Transverse colon (tissue), 4 donors: ENCODE measurements at regions of chr11 and their contacts with region 1.

Region 1: GRCh38 chr11:120511116-120511819 is at the start of gene GRIK4:
- DNase-seq: peak; percentile 81
- H3K4me3 ChIP-seq: peak within 1 kb of the TSS in 3 of 4 donors; percentile 33 to 49 (median 43)
- H3K27ac ChIP-seq: no peak within 1 kb of the TSS
- H3K4me1 ChIP-seq: peaks cover 0 to 5% (median 0%) of the 10 kb centered on the region in 4 donors
- H3K27me3 ChIP-seq: peaks cover 90% of the 10 kb centered on the region
- CTCF ChIP-seq: peak; percentile 89 to 95 (median 91)
- EP300 ChIP-seq: no peak
- POLR2A ChIP-seq: no peak
- total RNA-seq, gene GRIK4: 2.6 TPM in 1 of 4 donors, not detected in the others

Region 2: GRCh38 chr11:120254788-120255518 is 256.3 kb before region 1 on chr11:
- in situ Hi-C with region 1: no loop called
- intact Hi-C with region 1: no loop called
- DNase-seq: no peak
- H3K4me3 ChIP-seq: no peak overlapping the region
- H3K27ac ChIP-seq: no peak overlapping the region
- H3K4me1 ChIP-seq: no peaks in the 10 kb centered on the region
- H3K27me3 ChIP-seq: peaks cover 75% of the 10 kb centered on the region
- CTCF ChIP-seq: no peak
- EP300 ChIP-seq: no peak
- POLR2A ChIP-seq: no peak

Region 3: GRCh38 chr11:120688163-120688562 is 176.9 kb after region 1 on chr11:
- in situ Hi-C with region 1: loop called in 3 of 4 experiments (anchors 5 to 25 kb)
- intact Hi-C with region 1: no loop called
- DNase-seq: no peak
- H3K4me3 ChIP-seq: no peak overlapping the region
- H3K27ac ChIP-seq: no peak overlapping the region
- H3K4me1 ChIP-seq: no peaks in the 10 kb centered on the region
- H3K27me3 ChIP-seq: peaks cover 31% of the 10 kb centered on the region
- CTCF ChIP-seq: no peak
- EP300 ChIP-seq: no peak
- POLR2A ChIP-seq: no peak

Region 4: DNA sequence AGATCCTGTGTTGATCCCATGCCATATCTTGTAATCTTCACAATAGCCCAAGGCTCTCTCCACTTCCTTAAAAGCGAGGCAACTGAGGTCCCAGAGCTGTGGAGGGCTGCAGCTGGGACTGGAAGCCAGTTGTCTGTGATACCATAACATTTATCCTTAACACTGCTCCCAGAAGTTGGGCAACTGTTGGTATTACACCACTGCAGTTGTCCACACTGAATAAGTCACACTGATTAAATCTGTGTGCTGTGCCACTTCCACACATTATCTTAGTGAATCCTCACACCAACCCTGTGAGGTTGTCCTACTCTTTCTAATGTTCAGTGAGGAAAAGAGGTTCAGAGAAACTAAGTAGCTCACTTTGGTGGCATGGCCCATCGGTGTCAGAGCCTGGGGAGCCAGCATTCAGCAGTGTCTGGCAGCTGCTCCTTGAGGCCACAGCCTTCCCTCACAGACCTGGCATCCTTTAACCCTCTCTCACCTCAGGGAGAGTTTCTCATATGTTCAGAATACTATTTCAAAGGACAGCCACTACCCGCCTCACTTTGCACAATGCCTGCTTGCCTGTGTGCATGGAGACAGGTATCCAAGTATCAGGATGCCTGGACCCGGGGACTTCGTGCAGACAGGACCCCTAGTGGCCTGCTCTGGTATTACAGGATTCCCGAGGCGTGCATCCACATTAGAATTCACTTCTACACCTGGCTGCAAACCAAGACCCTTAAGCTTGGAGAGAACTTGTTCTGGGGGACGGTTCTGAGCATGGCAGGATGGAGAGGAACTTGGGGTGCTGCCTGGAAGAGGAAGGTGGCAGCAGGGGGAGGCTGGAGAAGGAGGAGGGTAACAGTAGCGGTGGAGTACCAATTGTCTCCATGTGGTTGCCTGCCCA is 290.8 kb after region 1 on chr11:
- in situ Hi-C with region 1: loop called in 2 of 4 experiments (anchors 25 kb)
- intact Hi-C with region 1: loop called (anchors 5 kb)
- DNase-seq: peak; percentile 62
- H3K4me3 ChIP-seq: no peak overlapping the region
- H3K27ac ChIP-seq: no peak overlapping the region
- H3K4me1 ChIP-seq: no peaks in the 10 kb centered on the region
- H3K27me3 ChIP-seq: peaks cover 7% of the 10 kb centered on the region
- CTCF ChIP-seq: peak; percentile 70 to 94 (median 93)
- EP300 ChIP-seq: no peak
- POLR2A ChIP-seq: no peak

Region 5: DNA sequence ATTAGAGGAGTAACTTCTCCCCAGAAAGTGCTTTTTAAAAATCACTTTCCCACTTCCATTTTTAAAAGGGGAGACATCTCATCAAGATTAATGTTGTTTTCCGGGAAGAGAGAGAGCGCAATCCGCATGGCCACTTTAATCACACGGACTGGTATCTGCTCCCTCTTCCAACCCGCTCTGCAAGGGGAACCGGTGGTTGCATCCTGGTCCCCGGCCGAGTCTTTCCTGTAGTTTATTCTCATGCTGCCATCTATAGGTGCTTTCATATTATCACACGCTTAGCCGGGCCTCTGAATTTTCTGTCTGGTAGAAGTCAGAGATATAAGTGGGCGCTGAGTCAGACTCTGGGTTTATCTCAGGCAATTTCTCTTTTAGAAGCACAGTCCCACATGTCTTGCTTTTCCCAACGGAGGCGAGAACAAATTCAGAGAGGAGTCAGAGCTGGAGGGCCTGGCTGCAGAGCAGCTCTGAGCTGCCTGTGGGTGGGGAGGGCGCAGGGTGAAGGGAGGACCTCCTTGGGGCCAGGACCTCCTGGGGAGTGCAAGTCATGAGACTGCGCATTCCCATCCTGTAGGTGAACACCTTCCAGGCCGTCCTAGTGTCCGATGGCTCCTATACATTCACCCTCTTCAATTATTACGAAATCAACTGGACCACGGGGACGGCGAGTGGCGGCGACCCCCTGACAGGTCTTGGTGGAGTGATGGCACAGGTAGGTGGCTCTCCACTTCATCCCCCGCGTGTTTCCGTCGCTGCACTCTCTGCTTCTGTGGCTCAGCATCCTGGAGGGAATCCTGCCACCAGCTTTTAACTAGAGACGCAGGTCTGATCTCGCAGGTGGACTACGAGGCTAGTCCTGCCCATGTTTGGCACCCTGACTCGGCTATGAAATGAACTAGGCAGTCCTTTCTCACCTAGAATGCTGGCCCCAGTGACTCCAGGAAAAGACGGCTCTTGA is 601.5 kb after region 1 on chr11:
- in situ Hi-C with region 1: loop called in 1 of 4 experiments (anchors 25 kb)
- intact Hi-C with region 1: no loop called
- DNase-seq: peak; percentile 49
- H3K4me3 ChIP-seq: no peak overlapping the region
- H3K27ac ChIP-seq: no peak overlapping the region
- H3K4me1 ChIP-seq: no peaks in the 10 kb centered on the region
- H3K27me3 ChIP-seq: no peaks in the 10 kb centered on the region
- CTCF ChIP-seq: peak; percentile 49 to 56 (median 54)
- EP300 ChIP-seq: no peak
- POLR2A ChIP-seq: no peak